Activated CD4-positive, alpha-beta memory T cell treated with anti-CD3 and anti-CD28 coated beads, Interleukin-2, amount 10 ng/mL, durations not matched to agents 7 days and 5 days (primary cell): ENCODE measurements at regions of chr15 and their contacts with region 1.

Region 1: GRCh38 chr15:100572362-100572983 is 29.5 kb downstream of the LINS1 start:
- DNase-seq: no peak
- H3K4me3 Mint-ChIP-seq: peak overlapping the region; percentile 66
- H3K27ac Mint-ChIP-seq: peak overlapping the region; percentile 75
- H3K4me1 Mint-ChIP-seq: peaks cover 51% of the 10 kb centered on the region
- H3K27me3 Mint-ChIP-seq: no peaks in the 10 kb centered on the region

Region 2: DNA sequence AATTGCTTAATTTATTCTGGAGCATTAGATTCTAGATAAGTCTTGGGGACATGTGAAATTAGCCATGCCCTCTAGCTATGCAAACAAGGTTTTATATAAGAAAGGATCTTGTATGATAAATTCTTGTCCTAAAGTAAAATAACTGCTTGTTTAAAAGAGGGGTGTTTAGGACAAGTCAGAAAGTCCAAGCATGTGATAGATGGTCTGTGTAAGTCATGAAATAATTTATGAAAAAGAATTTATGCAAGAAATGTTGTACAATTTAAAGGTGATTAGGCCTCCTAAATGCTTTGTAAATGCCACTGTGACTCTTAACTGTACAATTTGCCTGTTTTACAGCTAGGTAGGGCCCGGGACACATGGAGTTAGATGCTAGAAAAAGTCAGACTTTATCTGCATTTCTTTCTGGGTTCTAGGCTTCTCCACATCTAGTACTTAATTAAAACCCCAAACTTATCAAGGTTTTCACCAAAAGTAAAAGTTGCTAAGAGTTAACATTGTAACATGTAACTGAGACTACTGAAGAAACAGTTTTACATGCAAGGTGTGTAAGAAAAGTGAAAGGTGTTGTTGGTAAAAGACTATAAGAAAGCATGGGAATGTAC is 16.3 kb after region 1 on chr15:
- CTCF ChIA-PET with region 1: interaction called, 11 read pairs
- POLR2A ChIA-PET with region 1: interaction called, 3 read pairs
- DNase-seq: no peak
- H3K4me3 Mint-ChIP-seq: no peak overlapping the region
- H3K27ac Mint-ChIP-seq: no peak overlapping the region
- H3K4me1 Mint-ChIP-seq: peaks cover 26% of the 10 kb centered on the region
- H3K27me3 Mint-ChIP-seq: no peaks in the 10 kb centered on the region

Region 3: DNA sequence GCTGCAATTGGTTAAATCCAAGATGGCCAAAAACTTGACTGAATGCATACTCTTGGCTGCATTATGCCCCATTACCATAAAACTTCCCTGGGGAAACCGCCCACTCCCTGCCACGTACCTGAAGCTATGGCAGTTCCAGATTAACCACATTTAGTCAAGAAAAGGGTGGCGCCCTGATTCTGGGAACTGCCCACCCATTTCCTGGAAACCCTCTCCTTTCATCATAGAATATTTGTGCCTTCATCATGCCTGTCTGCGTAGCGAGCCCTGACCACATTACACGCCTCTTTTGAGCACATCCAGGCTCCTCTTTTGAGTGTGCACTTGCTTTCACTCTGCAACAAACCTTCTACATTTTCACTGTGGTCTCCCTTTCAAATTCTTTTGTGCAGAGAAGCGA is 24.3 kb after region 1 on chr15:
- CTCF ChIA-PET with region 1: interaction called, 38 read pairs
- POLR2A ChIA-PET with region 1: interaction called, 107 read pairs
- DNase-seq: peak; percentile 97
- H3K4me3 Mint-ChIP-seq: peak overlapping the region; percentile 71
- H3K27ac Mint-ChIP-seq: peak overlapping the region; percentile 93
- H3K4me1 Mint-ChIP-seq: peaks cover 71% of the 10 kb centered on the region
- H3K27me3 Mint-ChIP-seq: no peaks in the 10 kb centered on the region

Region 4: GRCh38 chr15:100602064-100602822 is 29.8 kb after region 1 on chr15 and contains the starts of genes ASB7 and LINS1:
- CTCF ChIA-PET with region 1: interaction called, 38 read pairs
- POLR2A ChIA-PET with region 1: interaction called, 107 read pairs
- DNase-seq: peak; percentile 100
- H3K4me3 Mint-ChIP-seq: no peak within 1 kb of the TSS
- H3K27ac Mint-ChIP-seq: no peak within 1 kb of the TSS
- H3K4me1 Mint-ChIP-seq: peaks cover 62% of the 10 kb centered on the region
- H3K27me3 Mint-ChIP-seq: no peaks in the 10 kb centered on the region
- total RNA-seq, gene ASB7: 23.1 to 23.3 TPM
- total RNA-seq, gene LINS1: 46.1 to 49.6 TPM

Region 5: GRCh38 chr15:100778831-100779288 is 206.4 kb after region 1 on chr15:
- CTCF ChIA-PET with region 1: no interaction called
- POLR2A ChIA-PET with region 1: no interaction called
- DNase-seq: no peak
- H3K4me3 Mint-ChIP-seq: no peak overlapping the region
- H3K27ac Mint-ChIP-seq: no peak overlapping the region
- H3K4me1 Mint-ChIP-seq: no peaks in the 10 kb centered on the region
- H3K27me3 Mint-ChIP-seq: no peaks in the 10 kb centered on the region

Region 6: GRCh38 chr15:100809151-100809550 is 236.7 kb after region 1 on chr15:
- CTCF ChIA-PET with region 1: no interaction called
- POLR2A ChIA-PET with region 1: no interaction called
- DNase-seq: no peak
- H3K4me3 Mint-ChIP-seq: no peak overlapping the region
- H3K27ac Mint-ChIP-seq: no peak overlapping the region
- H3K4me1 Mint-ChIP-seq: no peaks in the 10 kb centered on the region
- H3K27me3 Mint-ChIP-seq: no peaks in the 10 kb centered on the region